ENCODE measurements at regions of chr15 and their contacts with region 1.

Region 1: DNA sequence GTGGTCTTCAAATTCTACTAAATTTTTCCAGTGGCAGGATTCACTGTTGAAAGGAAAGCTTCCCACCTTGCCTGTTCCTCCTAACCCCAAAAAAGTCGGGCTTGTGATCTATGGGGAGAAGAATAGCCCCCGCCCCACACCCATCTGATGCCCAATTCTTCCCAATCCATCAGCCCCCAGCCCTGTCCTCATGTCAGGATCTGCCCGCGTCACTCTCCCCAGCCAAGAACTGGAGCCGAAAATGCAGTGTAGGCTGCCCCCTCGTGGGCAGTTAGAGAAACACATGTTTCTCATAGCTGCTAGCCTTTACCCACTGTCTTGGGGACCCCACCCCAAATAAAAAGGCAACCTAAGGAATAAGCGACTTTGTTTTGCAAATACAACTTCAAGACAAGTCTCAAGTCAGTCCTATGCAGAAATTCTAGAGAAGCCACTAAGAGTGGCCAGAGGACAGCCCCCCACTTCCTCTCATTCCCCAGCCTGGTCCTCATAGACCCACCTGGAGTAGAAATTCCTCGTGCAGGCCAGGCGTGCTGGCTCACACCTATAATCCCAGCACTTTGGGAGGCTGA is 13.0 kb upstream of the CSK start:
- DNase-seq: peak; percentile 74 to 75
- H3K4me3 ChIP-seq: no peak overlapping the region
- H3K4me3 Mint-ChIP-seq: peak overlapping the region; percentile 52
- H3K27ac Mint-ChIP-seq: peak overlapping the region; percentile 58
- H3K4me1 ChIP-seq: peaks cover 4% of the 10 kb centered on the region; the same call in 1 of the 2 replicates
- H3K4me1 Mint-ChIP-seq: peaks cover 7% of the 10 kb centered on the region
- H3K27me3 ChIP-seq: no peaks in the 10 kb centered on the region
- H3K27me3 Mint-ChIP-seq: no peaks in the 10 kb centered on the region
- CTCF ChIP-seq: peak; percentile 77 to 78

Region 2: GRCh38 chr15:74373731-74374647 is 394.9 kb before region 1 on chr15:
- CTCF ChIA-PET with region 1: no interaction called
- POLR2A ChIA-PET with region 1: no interaction called
- intact Hi-C with region 1: loop called (anchors 2 kb)
- DNase-seq: peak; percentile 96
- H3K4me3 ChIP-seq: peak overlapping the region; percentile 77
- H3K4me3 Mint-ChIP-seq: peak overlapping the region; percentile 77
- H3K27ac Mint-ChIP-seq: no peak overlapping the region
- H3K4me1 ChIP-seq: peaks cover 9% of the 10 kb centered on the region
- H3K4me1 Mint-ChIP-seq: no peaks in the 10 kb centered on the region
- H3K27me3 ChIP-seq: no peaks in the 10 kb centered on the region
- H3K27me3 Mint-ChIP-seq: peaks cover 6% of the 10 kb centered on the region
- CTCF ChIP-seq: peak; percentile 79 to 85

Region 3: GRCh38 chr15:74635228-74635627 is 133.6 kb before region 1 on chr15:
- CTCF ChIA-PET with region 1: interaction called, 211 read pairs
- POLR2A ChIA-PET with region 1: interaction called, 7 read pairs
- intact Hi-C with region 1: loop called (anchors 1 kb)
- DNase-seq: peak; percentile 66 to 77
- H3K4me3 ChIP-seq: no peak overlapping the region
- H3K4me3 Mint-ChIP-seq: no peak overlapping the region
- H3K27ac Mint-ChIP-seq: peak overlapping the region; percentile 46
- H3K4me1 ChIP-seq: no peaks in the 10 kb centered on the region
- H3K4me1 Mint-ChIP-seq: peaks cover 14% of the 10 kb centered on the region
- H3K27me3 ChIP-seq: no peaks in the 10 kb centered on the region
- H3K27me3 Mint-ChIP-seq: no peaks in the 10 kb centered on the region
- CTCF ChIP-seq: peak; percentile 80 to 82

Region 4: GRCh38 chr15:74723754-74724334 is 45.0 kb before region 1 on chr15:
- CTCF ChIA-PET with region 1: interaction called, 20 read pairs
- POLR2A ChIA-PET with region 1: interaction called, 5 read pairs
- intact Hi-C with region 1: loop called (anchors 2 kb)
- DNase-seq: peak in 1 of 2 experiments; percentile 64
- H3K4me3 ChIP-seq: no peak overlapping the region; the same call in 1 of the 2 replicates
- H3K4me3 Mint-ChIP-seq: peak overlapping the region; percentile 79
- H3K27ac Mint-ChIP-seq: peak overlapping the region; percentile 58
- H3K4me1 ChIP-seq: peaks cover 27% of the 10 kb centered on the region
- H3K4me1 Mint-ChIP-seq: peaks cover 16% of the 10 kb centered on the region
- H3K27me3 ChIP-seq: no peaks in the 10 kb centered on the region
- H3K27me3 Mint-ChIP-seq: no peaks in the 10 kb centered on the region
- CTCF ChIP-seq: no peak

Region 5: GRCh38 chr15:74835307-74835823 is 66.5 kb after region 1 on chr15:
- CTCF ChIA-PET with region 1: interaction called, 7 read pairs
- POLR2A ChIA-PET with region 1: no interaction called
- intact Hi-C with region 1: loop called (anchors 2 kb)
- DNase-seq: peak; percentile 76 to 88
- H3K4me3 ChIP-seq: no peak overlapping the region
- H3K4me3 Mint-ChIP-seq: no peak overlapping the region
- H3K27ac Mint-ChIP-seq: no peak overlapping the region
- H3K4me1 ChIP-seq: no peaks in the 10 kb centered on the region
- H3K4me1 Mint-ChIP-seq: no peaks in the 10 kb centered on the region
- H3K27me3 ChIP-seq: no peaks in the 10 kb centered on the region
- H3K27me3 Mint-ChIP-seq: no peaks in the 10 kb centered on the region
- CTCF ChIP-seq: peak; percentile 57 to 83

Region 6: GRCh38 chr15:74906446-74907162 is 137.7 kb after region 1 on chr15 and contains the start of gene FAM219B:
- CTCF ChIA-PET with region 1: interaction called, 14 read pairs
- POLR2A ChIA-PET with region 1: no interaction called
- intact Hi-C with region 1: no loop called
- DNase-seq: peak; percentile 88 to 93
- H3K4me3 ChIP-seq: peak within 1 kb of the TSS; percentile 79
- H3K4me3 Mint-ChIP-seq: peak within 1 kb of the TSS; percentile 99
- H3K27ac Mint-ChIP-seq: peak within 1 kb of the TSS; percentile 97
- H3K4me1 ChIP-seq: peaks cover 4% of the 10 kb centered on the region; the same call in 1 of the 2 replicates
- H3K4me1 Mint-ChIP-seq: no peaks in the 10 kb centered on the region
- H3K27me3 ChIP-seq: no peaks in the 10 kb centered on the region
- H3K27me3 Mint-ChIP-seq: no peaks in the 10 kb centered on the region
- CTCF ChIP-seq: no peak
- total RNA-seq, gene FAM219B: 73.7 and 75.4 TPM in 2 replicates

Region 7: DNA sequence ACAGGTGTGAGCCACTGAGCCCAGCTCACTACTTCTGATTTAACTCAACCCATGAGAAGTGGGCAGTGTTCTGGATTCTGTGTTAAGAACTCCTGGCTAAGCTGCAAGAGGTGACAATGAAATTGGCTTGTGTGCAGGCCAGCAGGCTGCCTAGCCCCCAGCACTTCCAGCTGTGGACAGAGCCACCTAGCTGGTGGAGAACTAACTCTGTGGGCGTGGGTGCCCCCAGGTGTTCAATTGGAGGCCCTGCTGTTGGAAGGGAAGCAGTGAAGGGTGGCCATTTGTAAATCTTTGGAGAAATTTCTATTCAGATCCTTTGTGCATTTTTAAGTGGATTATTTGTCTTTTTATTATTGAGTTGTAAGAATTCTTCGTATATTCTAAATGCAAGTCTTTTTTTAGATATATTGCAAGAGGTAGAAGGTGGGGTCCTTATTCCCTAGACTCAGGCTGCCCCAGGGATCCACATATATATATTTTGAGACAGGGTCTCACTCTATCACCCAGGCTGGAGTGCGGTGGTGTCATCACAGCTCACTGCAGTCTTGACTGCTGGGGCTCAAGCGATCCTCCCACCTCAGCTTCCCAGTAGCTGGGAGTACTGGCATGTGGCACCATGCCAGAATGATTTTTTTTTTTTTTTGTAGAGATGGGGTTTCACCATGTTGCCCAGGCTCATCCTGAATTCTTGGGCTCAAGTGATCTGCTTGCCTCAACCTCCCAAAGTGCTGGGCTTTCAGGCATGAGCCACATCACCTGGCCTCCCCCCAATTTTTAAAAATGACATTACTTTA is 219.3 kb after region 1 on chr15:
- CTCF ChIA-PET with region 1: interaction called, 7 read pairs
- POLR2A ChIA-PET with region 1: no interaction called
- intact Hi-C with region 1: loop called (anchors 1 kb)
- DNase-seq: peak; percentile 72 to 78
- H3K4me3 ChIP-seq: no peak overlapping the region
- H3K4me3 Mint-ChIP-seq: no peak overlapping the region
- H3K27ac Mint-ChIP-seq: no peak overlapping the region
- H3K4me1 ChIP-seq: no peaks in the 10 kb centered on the region
- H3K4me1 Mint-ChIP-seq: peaks cover 7% of the 10 kb centered on the region
- H3K27me3 ChIP-seq: peaks cover 1% of the 10 kb centered on the region; the same call in 1 of the 2 replicates
- H3K27me3 Mint-ChIP-seq: peaks cover 20% of the 10 kb centered on the region
- CTCF ChIP-seq: peak; percentile 62 to 84